Activated naive CD4-positive, alpha-beta T cell treated with anti-CD3 and anti-CD28 coated beads for 36 hours (primary cell): ENCODE measurements at regions of chr1 and their contacts with region 1.

Region 1: GRCh38 chr1:76254104-76255030 is 179.8 kb downstream of the ST6GALNAC3 start:
- DNase-seq: peak; percentile 56
- H3K4me3 Mint-ChIP-seq: no peak overlapping the region
- H3K27ac Mint-ChIP-seq: peak overlapping the region; percentile 65
- H3K4me1 Mint-ChIP-seq: peaks cover 68% of the 10 kb centered on the region
- H3K27me3 Mint-ChIP-seq: no peaks in the 10 kb centered on the region

Region 2: GRCh38 chr1:76023669-76024435 is 230.5 kb before region 1 on chr1:
- CTCF ChIA-PET with region 1: no interaction called
- intact Hi-C with region 1: no loop called
- DNase-seq: peak; percentile 8
- H3K4me3 Mint-ChIP-seq: no peak overlapping the region
- H3K27ac Mint-ChIP-seq: no peak overlapping the region
- H3K4me1 Mint-ChIP-seq: peaks cover 21% of the 10 kb centered on the region
- H3K27me3 Mint-ChIP-seq: no peaks in the 10 kb centered on the region

Region 3: DNA sequence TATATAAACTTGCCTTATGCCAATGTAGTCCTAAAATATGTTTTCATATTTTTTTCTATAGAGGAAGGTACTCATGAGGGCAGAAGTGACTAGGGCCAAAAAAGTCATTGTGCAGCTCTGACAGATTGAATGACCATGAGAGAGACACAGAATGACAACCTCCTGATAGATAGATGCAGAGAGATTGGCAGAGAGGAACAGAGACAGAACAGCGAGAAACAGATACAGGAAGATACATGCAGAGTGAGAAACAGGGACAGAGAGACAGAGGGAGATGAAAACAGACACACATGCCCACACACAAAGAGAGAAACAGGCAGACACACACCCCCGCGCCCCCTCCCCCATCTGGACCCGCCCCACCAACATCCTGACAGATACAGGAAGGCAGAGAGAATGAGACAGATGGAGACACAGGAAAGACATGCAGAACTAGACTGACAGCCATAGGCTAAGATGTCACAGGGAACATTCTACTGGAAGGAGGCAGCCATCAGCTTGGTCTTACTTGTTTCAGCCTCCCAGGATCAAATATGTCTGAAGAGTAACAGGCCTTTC is 31.3 kb after region 1 on chr1:
- CTCF ChIA-PET with region 1: interaction called, 6 read pairs
- intact Hi-C with region 1: loop called (anchors 1 kb)
- DNase-seq: peak; percentile 56
- H3K4me3 Mint-ChIP-seq: no peak overlapping the region
- H3K27ac Mint-ChIP-seq: peak overlapping the region; percentile 62
- H3K4me1 Mint-ChIP-seq: peaks cover 61% of the 10 kb centered on the region
- H3K27me3 Mint-ChIP-seq: no peaks in the 10 kb centered on the region

Region 4: DNA sequence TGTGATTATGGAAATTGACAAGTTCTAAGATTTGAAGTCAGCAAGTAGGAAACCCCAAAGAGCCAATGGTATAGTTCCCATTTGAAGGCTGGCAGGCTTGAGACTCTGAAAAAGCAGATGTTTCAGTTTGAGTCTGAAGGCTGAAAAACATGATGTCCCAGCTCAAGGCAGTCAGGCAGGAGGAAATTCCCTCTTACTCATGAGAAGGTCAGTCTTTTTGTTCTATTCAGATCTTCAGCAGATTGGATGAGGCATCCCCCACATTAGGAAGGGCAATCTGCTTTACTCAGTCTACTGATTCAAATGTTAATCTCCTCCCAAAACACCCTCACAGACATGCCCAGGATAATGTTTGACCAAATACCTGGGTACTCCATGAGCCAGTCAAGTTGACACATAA is 240.4 kb after region 1 on chr1:
- CTCF ChIA-PET with region 1: no interaction called
- intact Hi-C with region 1: loop called (anchors 10 kb)
- DNase-seq: peak; percentile 60
- H3K4me3 Mint-ChIP-seq: no peak overlapping the region
- H3K27ac Mint-ChIP-seq: peak overlapping the region; percentile 67
- H3K4me1 Mint-ChIP-seq: peaks cover 17% of the 10 kb centered on the region
- H3K27me3 Mint-ChIP-seq: no peaks in the 10 kb centered on the region

Region 5: GRCh38 chr1:77060000-77060399 is 805.6 kb after region 1 on chr1:
- CTCF ChIA-PET with region 1: no interaction called
- intact Hi-C with region 1: no loop called
- DNase-seq: no peak
- H3K4me3 Mint-ChIP-seq: no peak overlapping the region
- H3K27ac Mint-ChIP-seq: no peak overlapping the region
- H3K4me1 Mint-ChIP-seq: no peaks in the 10 kb centered on the region
- H3K27me3 Mint-ChIP-seq: peaks cover 2% of the 10 kb centered on the region